Activated CD4-positive, alpha-beta T cell treated with anti-CD3 and anti-CD28 coated beads for 36 hours (primary cell): ENCODE measurements at regions of chr13 and their contacts with region 1.

Region 1: GRCh38 chr13:25901460-25902376 is 150.1 kb downstream of the SHISA2 start:
- DNase-seq: peak; percentile 48
- ATAC-seq: peak; percentile 88
- H3K4me3 Mint-ChIP-seq: no peak overlapping the region
- H3K27ac Mint-ChIP-seq: no peak overlapping the region
- H3K4me1 Mint-ChIP-seq: peaks cover 20% of the 10 kb centered on the region
- H3K27me3 Mint-ChIP-seq: peaks cover 2% of the 10 kb centered on the region

Region 2: DNA sequence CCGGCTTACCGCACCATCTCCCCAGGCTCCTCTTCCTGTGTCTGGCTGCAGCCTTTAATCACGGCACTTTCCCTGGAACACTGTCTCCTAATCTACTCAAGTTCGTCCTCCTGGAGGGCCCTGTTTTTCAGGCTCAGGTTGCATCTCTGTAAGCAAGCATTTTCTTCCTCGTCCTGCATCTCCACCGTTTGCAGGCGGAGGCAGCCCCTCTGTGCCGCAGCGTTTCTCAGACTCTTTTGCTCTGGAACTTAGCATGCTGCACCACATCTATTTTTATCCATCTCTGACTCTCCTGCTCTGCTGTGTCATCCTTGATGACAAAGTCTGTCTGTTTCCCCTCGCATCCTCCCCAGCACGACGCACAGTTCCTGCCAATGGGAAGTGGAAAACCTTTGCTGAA is 412.5 kb before region 1 on chr13:
- CTCF ChIA-PET with region 1: no interaction called
- POLR2A ChIA-PET with region 1: no interaction called
- intact Hi-C with region 1: no loop called
- DNase-seq: no peak
- ATAC-seq: no peak
- H3K4me3 Mint-ChIP-seq: no peak overlapping the region
- H3K27ac Mint-ChIP-seq: no peak overlapping the region
- H3K4me1 Mint-ChIP-seq: no peaks in the 10 kb centered on the region
- H3K27me3 Mint-ChIP-seq: peaks cover 18% of the 10 kb centered on the region

Region 3: DNA sequence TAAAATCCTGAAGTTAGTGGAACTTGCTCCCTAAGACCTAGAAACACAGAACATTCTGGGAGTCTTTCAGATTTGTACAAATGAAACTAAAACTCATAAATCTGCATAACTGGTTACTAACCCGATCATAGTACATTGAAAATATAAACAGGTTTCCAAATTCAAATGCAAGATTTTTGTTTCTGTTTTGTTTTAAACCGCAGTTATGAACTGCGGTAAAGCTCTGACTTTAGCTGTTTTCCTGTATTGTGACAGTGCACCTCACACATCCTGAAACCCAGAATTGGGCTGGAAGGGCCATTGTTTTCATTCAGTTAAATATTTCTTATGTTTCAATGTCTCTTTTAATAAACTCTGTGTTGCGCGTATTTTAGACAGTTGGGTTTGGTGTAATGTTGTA is 54.6 kb before region 1 on chr13:
- CTCF ChIA-PET with region 1: no interaction called
- POLR2A ChIA-PET with region 1: no interaction called
- intact Hi-C with region 1: loop called (anchors 1 to 10 kb)
- DNase-seq: no peak
- ATAC-seq: peak; percentile 70
- H3K4me3 Mint-ChIP-seq: no peak overlapping the region
- H3K27ac Mint-ChIP-seq: no peak overlapping the region
- H3K4me1 Mint-ChIP-seq: peaks cover 25% of the 10 kb centered on the region
- H3K27me3 Mint-ChIP-seq: peaks cover 3% of the 10 kb centered on the region

Region 4: DNA sequence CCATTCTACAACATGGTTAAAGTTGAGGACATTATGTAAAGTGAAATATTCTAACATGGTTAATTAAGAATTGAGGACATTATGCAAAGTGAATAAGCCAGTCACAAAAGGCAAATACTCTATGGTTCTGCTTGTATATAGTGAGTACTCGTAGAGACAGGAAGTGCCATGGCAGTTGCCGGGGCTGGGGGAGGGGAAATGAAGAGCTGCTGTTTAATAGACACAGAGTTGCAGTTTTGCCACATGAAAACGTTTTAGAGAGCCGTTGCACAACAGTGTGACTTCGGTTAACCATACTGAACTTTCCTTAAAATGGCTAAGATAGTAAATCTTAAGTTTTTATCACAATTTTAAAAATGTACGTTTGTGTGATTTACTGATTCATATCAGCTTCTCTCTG is 26.8 kb before region 1 on chr13:
- CTCF ChIA-PET with region 1: no interaction called
- POLR2A ChIA-PET with region 1: no interaction called
- intact Hi-C with region 1: loop called (anchors 1 to 2 kb)
- DNase-seq: peak; percentile 78
- ATAC-seq: peak; percentile 75
- H3K4me3 Mint-ChIP-seq: peak overlapping the region; percentile 20
- H3K27ac Mint-ChIP-seq: peak overlapping the region; percentile 78
- H3K4me1 Mint-ChIP-seq: peaks cover 70% of the 10 kb centered on the region
- H3K27me3 Mint-ChIP-seq: no peaks in the 10 kb centered on the region

Region 5: GRCh38 chr13:25886438-25887214 is 15.1 kb before region 1 on chr13:
- CTCF ChIA-PET with region 1: no interaction called
- POLR2A ChIA-PET with region 1: no interaction called
- intact Hi-C with region 1: loop called (anchors 2 kb)
- DNase-seq: peak; percentile 41
- ATAC-seq: peak; percentile 77
- H3K4me3 Mint-ChIP-seq: no peak overlapping the region
- H3K27ac Mint-ChIP-seq: no peak overlapping the region
- H3K4me1 Mint-ChIP-seq: peaks cover 52% of the 10 kb centered on the region
- H3K27me3 Mint-ChIP-seq: no peaks in the 10 kb centered on the region

Region 6: GRCh38 chr13:25971459-25972145 is 69.9 kb after region 1 on chr13:
- CTCF ChIA-PET with region 1: no interaction called
- POLR2A ChIA-PET with region 1: no interaction called
- intact Hi-C with region 1: loop called in 1 of 2 experiments (anchors 2 kb)
- DNase-seq: peak; percentile 61
- ATAC-seq: peak; percentile 84
- H3K4me3 Mint-ChIP-seq: no peak overlapping the region
- H3K27ac Mint-ChIP-seq: no peak overlapping the region
- H3K4me1 Mint-ChIP-seq: peaks cover 33% of the 10 kb centered on the region
- H3K27me3 Mint-ChIP-seq: no peaks in the 10 kb centered on the region

Region 7: GRCh38 chr13:26425443-26426358 is 524.0 kb after region 1 on chr13:
- CTCF ChIA-PET with region 1: no interaction called
- POLR2A ChIA-PET with region 1: no interaction called
- intact Hi-C with region 1: no loop called
- DNase-seq: no peak
- ATAC-seq: no peak
- H3K4me3 Mint-ChIP-seq: no peak overlapping the region
- H3K27ac Mint-ChIP-seq: no peak overlapping the region
- H3K4me1 Mint-ChIP-seq: no peaks in the 10 kb centered on the region
- H3K27me3 Mint-ChIP-seq: peaks cover 3% of the 10 kb centered on the region